ENCODE measurements at regions of chr15 and their contacts with region 1.

Region 1: DNA sequence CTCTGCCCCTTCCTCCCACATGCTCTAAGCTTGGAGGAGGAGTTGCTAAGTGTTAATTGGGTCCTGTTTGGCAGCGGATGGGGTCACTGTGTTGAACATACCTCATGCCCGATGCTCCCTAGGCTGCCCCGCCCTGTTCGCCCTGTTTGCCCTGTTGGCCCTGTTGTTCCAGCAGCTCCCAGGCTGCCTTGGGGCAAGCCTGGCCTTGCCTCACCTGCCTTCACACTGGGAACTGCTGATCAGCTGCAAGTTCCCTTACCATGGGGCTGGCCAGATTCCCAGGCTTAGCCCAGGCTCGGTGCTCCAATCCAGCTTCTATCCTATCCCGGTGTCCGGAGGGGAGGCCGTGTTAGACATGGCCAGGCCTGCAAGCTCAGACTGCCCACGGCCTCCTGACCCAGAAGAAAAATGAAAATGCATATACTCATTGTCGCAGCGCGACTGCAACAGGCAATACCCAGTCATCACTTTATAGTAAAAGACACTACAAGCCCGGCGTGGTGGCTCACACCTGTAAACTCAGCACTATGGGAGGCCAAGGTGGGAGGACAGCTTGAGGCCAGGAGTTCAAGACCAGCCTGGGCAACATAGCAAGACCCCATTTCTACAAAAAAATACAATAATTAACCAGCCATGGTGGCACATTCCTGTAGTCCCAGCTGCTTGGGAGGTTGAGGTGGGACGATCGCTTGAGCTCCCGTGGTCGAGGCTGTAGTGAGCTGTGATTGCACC is 42.9 kb upstream of the ZNF710 start:
- DNase-seq: no peak
- ATAC-seq: no peak
- H3K4me3 ChIP-seq: no peak overlapping the region
- H3K27ac ChIP-seq: no peak overlapping the region
- H3K4me1 ChIP-seq: no peaks in the 10 kb centered on the region
- H3K27me3 ChIP-seq: no peaks in the 10 kb centered on the region
- CTCF ChIP-seq: no peak

Region 2: GRCh38 chr15:89980896-89981295 is 22.7 kb after region 1 on chr15:
- intact Hi-C with region 1: loop called in 1 of 2 experiments (anchors 2 kb)
- DNase-seq: no peak
- ATAC-seq: no peak
- H3K4me3 ChIP-seq: no peak overlapping the region
- H3K27ac ChIP-seq: no peak overlapping the region
- H3K4me1 ChIP-seq: no peaks in the 10 kb centered on the region
- H3K27me3 ChIP-seq: no peaks in the 10 kb centered on the region
- CTCF ChIP-seq: no peak

Region 3: GRCh38 chr15:90114451-90114901 is 156.2 kb after region 1 on chr15:
- intact Hi-C with region 1: no loop called
- DNase-seq: no peak
- ATAC-seq: no peak
- H3K4me3 ChIP-seq: no peak overlapping the region
- H3K27ac ChIP-seq: no peak overlapping the region
- H3K4me1 ChIP-seq: no peaks in the 10 kb centered on the region
- H3K27me3 ChIP-seq: no peaks in the 10 kb centered on the region
- CTCF ChIP-seq: no peak